HepG2 (cell line): ENCODE measurements at regions of chr5 and their contacts with region 1.

Region 1: GRCh38 chr5:104178829-104179456 is 616.4 kb upstream of the NUDT12 start:
- DNase-seq: peak; percentile 74
- ATAC-seq: peak; percentile 100
- H3K4me3 ChIP-seq: no peak overlapping the region
- H3K27ac ChIP-seq: no peak overlapping the region
- H3K4me1 ChIP-seq: no peaks in the 10 kb centered on the region; the same call in 1 of the 2 replicates
- H3K27me3 ChIP-seq: no peaks in the 10 kb centered on the region
- CTCF ChIP-seq: peak; percentile 94
- EP300 ChIP-seq: no peak
- POLR2A ChIP-seq: no peak
- RAD21 ChIP-seq: peak; percentile 86

Region 2: GRCh38 chr5:103232393-103232999 is 946.4 kb before region 1 on chr5:
- CTCF ChIA-PET with region 1: no interaction called
- POLR2A ChIA-PET with region 1: no interaction called
- in situ Hi-C with region 1: no loop called
- intact Hi-C with region 1: loop called (anchors 5 kb)
- DNase-seq: peak; percentile 41
- ATAC-seq: peak; percentile 89
- H3K4me3 ChIP-seq: no peak overlapping the region
- H3K27ac ChIP-seq: no peak overlapping the region
- H3K4me1 ChIP-seq: no peaks in the 10 kb centered on the region
- H3K27me3 ChIP-seq: 0 out of 5 replicates have a peak, but pooled peaks cover 0 to 3% of the 10 kb centered on the region in 2 experiments
- CTCF ChIP-seq: peak; percentile 71
- EP300 ChIP-seq: no peak
- POLR2A ChIP-seq: no peak
- RAD21 ChIP-seq: 0 out of 2 replicates have a peak, but pooled peaks have one; percentile 38

Region 3: GRCh38 chr5:103582364-103582763 is 596.6 kb before region 1 on chr5:
- CTCF ChIA-PET with region 1: interaction called, 24 read pairs
- POLR2A ChIA-PET with region 1: no interaction called
- in situ Hi-C with region 1: loop called (anchors 5 kb)
- intact Hi-C with region 1: loop called (anchors 1 kb)
- DNase-seq: peak; percentile 35
- ATAC-seq: no peak; the same call in 2 of the 3 replicates
- H3K4me3 ChIP-seq: no peak overlapping the region
- H3K27ac ChIP-seq: no peak overlapping the region
- H3K4me1 ChIP-seq: no peaks in the 10 kb centered on the region
- H3K27me3 ChIP-seq: no peaks in the 10 kb centered on the region; a peak in 1 of 5 replicates
- CTCF ChIP-seq: peak; percentile 53
- EP300 ChIP-seq: no peak
- POLR2A ChIP-seq: no peak
- RAD21 ChIP-seq: no peak

Region 4: DNA sequence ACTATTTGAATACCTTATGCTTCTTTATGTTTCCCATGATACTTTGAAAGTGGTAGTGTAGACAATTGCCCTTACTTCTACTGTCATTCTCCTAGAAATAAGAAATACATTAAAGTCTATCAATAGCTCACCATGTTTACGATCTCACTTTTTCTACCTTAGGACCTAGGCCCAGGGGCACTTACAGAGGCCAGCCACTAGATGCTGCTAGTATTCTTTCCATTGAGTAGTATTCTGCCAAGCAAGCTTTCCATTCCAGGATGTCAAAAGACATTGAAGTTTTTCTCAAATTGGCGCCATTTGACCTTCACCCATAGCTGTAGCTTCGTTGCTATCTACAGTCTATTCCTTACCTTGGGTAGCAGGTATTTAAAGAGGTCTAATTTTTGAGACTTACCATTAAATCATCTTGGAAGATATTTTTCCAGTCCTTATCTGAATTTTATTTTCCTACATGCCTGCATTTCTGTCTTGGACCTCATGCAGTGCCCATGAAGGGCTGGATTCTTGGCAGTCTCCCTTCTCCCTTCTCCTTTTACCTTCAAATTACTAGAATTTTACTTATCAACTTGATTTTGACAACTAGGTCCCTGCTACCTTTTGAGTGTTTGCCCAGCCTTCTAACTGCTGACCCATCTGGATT is 370.4 kb before region 1 on chr5:
- CTCF ChIA-PET with region 1: interaction called, 21 read pairs
- POLR2A ChIA-PET with region 1: interaction called, 3 read pairs
- in situ Hi-C with region 1: loop called (anchors 5 kb)
- intact Hi-C with region 1: loop called (anchors 1 kb)
- DNase-seq: peak; percentile 34
- ATAC-seq: peak; percentile 97
- H3K4me3 ChIP-seq: no peak overlapping the region
- H3K27ac ChIP-seq: no peak overlapping the region
- H3K4me1 ChIP-seq: no peaks in the 10 kb centered on the region
- H3K27me3 ChIP-seq: no peaks in the 10 kb centered on the region
- CTCF ChIP-seq: peak; percentile 81
- EP300 ChIP-seq: no peak
- POLR2A ChIP-seq: no peak
- RAD21 ChIP-seq: peak; percentile 63

Region 5: DNA sequence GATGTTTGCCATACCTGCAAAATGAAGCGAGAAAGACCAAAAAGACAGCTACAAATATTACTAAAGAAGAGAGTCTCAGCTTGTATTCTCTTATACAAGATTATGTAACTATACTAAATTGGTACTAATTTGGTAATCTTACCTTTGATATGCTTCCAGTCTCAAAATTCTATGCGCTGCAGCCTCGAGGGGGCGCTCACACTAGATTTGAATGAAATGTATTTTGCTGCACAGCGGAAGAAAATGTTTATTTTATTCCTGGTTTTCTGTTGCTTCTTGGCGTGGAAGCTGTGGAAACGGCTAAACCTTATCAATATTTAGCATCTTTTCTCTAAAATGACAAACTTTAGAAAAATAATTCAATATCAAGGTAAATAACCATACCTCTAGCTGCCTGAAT is 349.4 kb before region 1 on chr5:
- CTCF ChIA-PET with region 1: interaction called, 10 read pairs
- POLR2A ChIA-PET with region 1: no interaction called
- in situ Hi-C with region 1: no loop called
- intact Hi-C with region 1: loop called (anchors 1 kb)
- DNase-seq: no peak
- ATAC-seq: no peak
- H3K4me3 ChIP-seq: no peak overlapping the region
- H3K27ac ChIP-seq: no peak overlapping the region
- H3K4me1 ChIP-seq: no peaks in the 10 kb centered on the region
- H3K27me3 ChIP-seq: no peaks in the 10 kb centered on the region
- CTCF ChIP-seq: peak; percentile 18; the same call in 1 of the 2 replicates
- EP300 ChIP-seq: no peak
- POLR2A ChIP-seq: no peak
- RAD21 ChIP-seq: no peak

Region 6: DNA sequence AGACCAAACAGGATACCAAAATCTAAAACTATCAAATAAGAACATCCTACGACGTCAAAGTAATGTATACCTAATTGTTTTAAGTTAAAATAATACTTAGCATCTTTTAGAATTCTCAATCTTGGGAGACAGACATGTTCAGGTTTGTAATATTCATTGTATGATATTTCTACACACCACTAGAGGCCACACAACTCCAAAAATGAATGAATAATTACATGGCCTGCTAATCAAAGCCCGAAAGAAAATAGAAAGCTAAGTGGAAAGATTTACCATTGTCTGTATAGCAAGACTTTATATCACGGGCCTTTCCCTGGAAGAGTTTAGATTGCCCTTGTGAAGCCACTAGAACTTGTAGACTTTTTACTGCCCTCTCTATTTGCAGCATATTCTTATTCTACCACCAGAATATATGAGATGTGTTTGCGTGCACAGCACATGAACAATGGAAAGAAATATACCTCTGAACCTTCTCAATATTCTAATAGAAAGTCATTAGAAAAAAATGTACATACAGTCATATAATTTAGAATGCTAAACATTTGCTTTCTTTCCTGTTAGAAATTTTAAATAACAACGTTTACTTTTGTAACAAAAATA is 236.3 kb before region 1 on chr5:
- CTCF ChIA-PET with region 1: no interaction called
- POLR2A ChIA-PET with region 1: no interaction called
- in situ Hi-C with region 1: no loop called
- intact Hi-C with region 1: loop called (anchors 2 kb)
- DNase-seq: no peak
- ATAC-seq: no peak
- H3K4me3 ChIP-seq: no peak overlapping the region
- H3K27ac ChIP-seq: no peak overlapping the region
- H3K4me1 ChIP-seq: no peaks in the 10 kb centered on the region
- H3K27me3 ChIP-seq: no peaks in the 10 kb centered on the region
- CTCF ChIP-seq: 0 out of 2 replicates have a peak, but pooled peaks have one; percentile 5
- EP300 ChIP-seq: no peak
- POLR2A ChIP-seq: no peak
- RAD21 ChIP-seq: no peak

Region 7: GRCh38 chr5:104456122-104456521 is 277.2 kb after region 1 on chr5:
- CTCF ChIA-PET with region 1: no interaction called
- POLR2A ChIA-PET with region 1: no interaction called
- in situ Hi-C with region 1: no loop called
- intact Hi-C with region 1: no loop called
- DNase-seq: no peak
- ATAC-seq: no peak
- H3K4me3 ChIP-seq: no peak overlapping the region
- H3K27ac ChIP-seq: no peak overlapping the region
- H3K4me1 ChIP-seq: no peaks in the 10 kb centered on the region
- H3K27me3 ChIP-seq: no peaks in the 10 kb centered on the region
- CTCF ChIP-seq: no peak
- EP300 ChIP-seq: no peak
- POLR2A ChIP-seq: no peak
- RAD21 ChIP-seq: no peak